ENCODE measurements at regions of chr14 and their contacts with region 1.

Region 1: DNA sequence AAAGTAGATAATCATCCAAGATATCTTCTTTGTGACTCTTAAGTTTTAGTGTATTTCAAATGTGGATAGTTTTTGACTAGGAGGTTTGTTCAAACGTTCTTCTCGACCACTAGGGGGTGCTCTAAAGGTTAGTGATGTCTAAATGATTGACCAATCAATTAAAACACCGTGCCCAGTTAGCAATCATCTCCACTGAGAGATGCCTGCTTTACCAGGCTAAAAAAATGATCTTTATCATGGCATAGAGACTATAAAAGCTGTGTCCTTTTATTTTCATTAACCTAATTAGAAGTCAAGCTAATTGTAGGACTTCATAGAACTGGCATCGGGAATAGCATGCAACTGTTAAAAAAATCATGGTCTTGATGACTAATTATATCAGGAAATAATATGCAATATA is 153.9 kb downstream of the PRKCH start:
- DNase-seq: no peak
- H3K4me3 ChIP-seq: no peak overlapping the region
- H3K27ac ChIP-seq: no peak overlapping the region
- H3K4me1 ChIP-seq: peaks cover 0 to 10% (median 7%) of the 10 kb centered on the region in 4 experiments; a peak in 5 of 7 replicates
- H3K27me3 ChIP-seq: no peaks in the 10 kb centered on the region
- CTCF ChIP-seq: peak in 2 of 3 experiments; percentile 26 to 55; a peak in 2 of 4 replicates
- EP300 ChIP-seq: no peak
- POLR2A ChIP-seq: no peak
- RAD21 ChIP-seq: peak; percentile 63 to 71

Region 2: DNA sequence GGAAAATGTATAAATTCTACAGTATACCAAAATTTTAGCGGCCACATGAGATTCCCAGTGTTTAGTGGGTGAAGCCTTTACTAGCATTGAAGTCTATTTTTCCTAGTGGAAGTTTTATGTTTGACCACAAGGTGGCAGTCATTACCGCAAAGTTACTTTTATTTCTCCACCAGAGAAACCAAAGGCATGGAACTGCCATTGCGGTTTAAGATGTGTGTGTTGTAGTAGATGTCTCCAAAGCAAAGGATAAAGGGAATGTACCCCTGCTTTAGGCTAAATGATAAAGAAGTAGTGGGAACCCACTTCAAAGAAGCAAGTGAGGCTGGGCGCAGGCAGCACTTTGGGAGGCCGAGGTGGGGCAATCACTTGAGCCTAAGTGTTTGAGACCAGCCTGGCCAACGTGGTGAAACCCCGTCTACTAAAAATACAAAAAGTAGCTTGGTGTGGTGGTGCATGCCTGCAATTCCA is 13.5 kb before region 1 on chr14:
- CTCF ChIA-PET with region 1: interaction called, 17 read pairs
- POLR2A ChIA-PET with region 1: interaction called, 4 read pairs
- DNase-seq: peak in 1 of 2 experiments; percentile 43
- H3K4me3 ChIP-seq: no peak overlapping the region
- H3K27ac ChIP-seq: no peak overlapping the region
- H3K4me1 ChIP-seq: peaks cover under 1 to 13% (median 8%) of the 10 kb centered on the region in 4 experiments
- H3K27me3 ChIP-seq: no peaks in the 10 kb centered on the region
- CTCF ChIP-seq: peak in 2 of 3 experiments; percentile 64 to 69; a peak in 3 of 4 replicates
- EP300 ChIP-seq: no peak
- POLR2A ChIP-seq: no peak
- RAD21 ChIP-seq: peak; percentile 88 to 92

Region 3: GRCh38 chr14:61493239-61493638 is 17.9 kb after region 1 on chr14:
- CTCF ChIA-PET with region 1: interaction called, 17 read pairs
- POLR2A ChIA-PET with region 1: interaction called, 11 read pairs
- DNase-seq: no peak
- H3K4me3 ChIP-seq: no peak overlapping the region
- H3K27ac ChIP-seq: no peak overlapping the region
- H3K4me1 ChIP-seq: peaks cover 0 to 2% (median under 1%) of the 10 kb centered on the region in 4 experiments; a peak in 2 of 7 replicates
- H3K27me3 ChIP-seq: no peaks in the 10 kb centered on the region
- CTCF ChIP-seq: no peak
- EP300 ChIP-seq: no peak
- POLR2A ChIP-seq: no peak
- RAD21 ChIP-seq: no peak

Region 4: GRCh38 chr14:61503167-61503801 is 28.0 kb after region 1 on chr14:
- CTCF ChIA-PET with region 1: interaction called, 10 read pairs
- POLR2A ChIA-PET with region 1: interaction called, 3 read pairs
- DNase-seq: no peak
- H3K4me3 ChIP-seq: no peak overlapping the region
- H3K27ac ChIP-seq: peak overlapping the region; percentile 66
- H3K4me1 ChIP-seq: peaks cover 10 to 30% (median 22%) of the 10 kb centered on the region in 4 experiments
- H3K27me3 ChIP-seq: no peaks in the 10 kb centered on the region
- CTCF ChIP-seq: no peak
- EP300 ChIP-seq: no peak
- POLR2A ChIP-seq: no peak
- RAD21 ChIP-seq: no peak

Region 5: DNA sequence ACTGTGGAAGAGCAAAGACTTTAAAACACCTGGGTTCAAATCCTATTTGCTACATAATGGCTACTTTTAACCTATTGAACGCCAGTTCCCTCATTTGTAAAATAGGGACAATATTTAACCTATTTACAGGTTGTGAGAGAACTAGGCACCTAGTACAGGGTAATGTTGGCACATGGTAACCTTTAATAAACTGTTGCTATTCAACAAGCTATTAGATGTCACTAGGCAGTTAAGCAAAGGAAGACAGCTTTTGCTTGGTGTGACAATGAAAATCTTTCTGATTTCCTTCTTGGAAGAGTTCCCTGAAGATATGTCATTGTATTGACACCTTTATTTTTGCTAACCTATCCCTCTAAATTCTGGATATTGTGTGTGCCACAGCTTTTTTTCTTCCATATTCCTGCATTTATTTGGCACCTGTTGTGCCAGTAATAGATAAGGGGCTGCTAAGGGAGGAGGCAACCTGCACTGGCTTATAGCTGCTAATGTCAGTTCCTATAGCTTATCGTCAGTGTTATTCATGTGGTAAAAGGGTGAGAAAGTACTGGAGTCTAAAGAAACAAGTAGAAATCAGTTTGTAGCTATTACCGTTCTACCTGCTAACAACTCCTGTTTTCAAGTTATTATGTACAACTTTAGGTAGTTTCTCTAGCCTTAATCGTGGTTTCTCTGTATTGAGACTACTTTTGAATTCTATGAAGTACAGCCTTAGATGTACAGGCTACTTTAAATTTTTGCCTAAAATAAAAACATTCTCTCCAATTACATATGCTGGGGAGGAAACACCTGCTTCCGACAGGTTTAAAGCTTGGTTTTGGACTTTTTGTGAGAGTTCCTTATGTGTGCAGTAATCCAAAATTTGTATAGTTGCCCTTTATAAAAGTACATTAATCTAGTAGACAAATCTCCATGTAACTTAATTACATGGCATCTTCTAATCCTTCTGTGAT is 244.3 kb after region 1 on chr14:
- CTCF ChIA-PET with region 1: interaction called, 14 read pairs
- POLR2A ChIA-PET with region 1: no interaction called
- DNase-seq: no peak
- H3K4me3 ChIP-seq: no peak overlapping the region
- H3K27ac ChIP-seq: no peak overlapping the region
- H3K4me1 ChIP-seq: peaks cover 2 to 9% (median 4%) of the 10 kb centered on the region in 4 experiments; a peak in 5 of 7 replicates
- H3K27me3 ChIP-seq: no peaks in the 10 kb centered on the region
- CTCF ChIP-seq: no peak
- EP300 ChIP-seq: no peak
- POLR2A ChIP-seq: no peak
- RAD21 ChIP-seq: no peak